ENCODE measurements at regions of chr6 and their contacts with region 1.

Region 1: GRCh38 chr6:30719791-30720737 is at the start of gene TUBB:
- DNase-seq: peak; percentile 95 to 97 (median 96)
- ATAC-seq: peak; percentile 69 to 83 (median 76)
- H3K4me3 ChIP-seq: peak within 1 kb of the TSS; percentile 47 to 84 (median 84)
- H3K27ac ChIP-seq: peak within 1 kb of the TSS; percentile 79 to 97 (median 86)
- H3K4me1 ChIP-seq: peaks cover 8 to 12% (median 8%) of the 10 kb centered on the region in 3 donors
- H3K27me3 ChIP-seq: no peaks in the 10 kb centered on the region
- CTCF ChIP-seq: no peak
- total RNA-seq, gene TUBB: 66.1 to 171 (median 116) TPM

Region 2: GRCh38 chr6:30541515-30542403 is 178.3 kb before region 1 on chr6:
- intact Hi-C with region 1: loop called in 1 of 3 experiments (anchors 10 kb)
- DNase-seq: peak; percentile 54 to 85 (median 76)
- ATAC-seq: peak; percentile 66 to 95 (median 88)
- H3K4me3 ChIP-seq: peak overlapping the region in 2 of 4 donors; percentile 10 to 24
- H3K27ac ChIP-seq: no peak overlapping the region
- H3K4me1 ChIP-seq: peaks cover 0 to 4% (median 3%) of the 10 kb centered on the region in 3 donors
- H3K27me3 ChIP-seq: no peaks in the 10 kb centered on the region
- CTCF ChIP-seq: peak; percentile 91 to 97 (median 94)

Region 3: DNA sequence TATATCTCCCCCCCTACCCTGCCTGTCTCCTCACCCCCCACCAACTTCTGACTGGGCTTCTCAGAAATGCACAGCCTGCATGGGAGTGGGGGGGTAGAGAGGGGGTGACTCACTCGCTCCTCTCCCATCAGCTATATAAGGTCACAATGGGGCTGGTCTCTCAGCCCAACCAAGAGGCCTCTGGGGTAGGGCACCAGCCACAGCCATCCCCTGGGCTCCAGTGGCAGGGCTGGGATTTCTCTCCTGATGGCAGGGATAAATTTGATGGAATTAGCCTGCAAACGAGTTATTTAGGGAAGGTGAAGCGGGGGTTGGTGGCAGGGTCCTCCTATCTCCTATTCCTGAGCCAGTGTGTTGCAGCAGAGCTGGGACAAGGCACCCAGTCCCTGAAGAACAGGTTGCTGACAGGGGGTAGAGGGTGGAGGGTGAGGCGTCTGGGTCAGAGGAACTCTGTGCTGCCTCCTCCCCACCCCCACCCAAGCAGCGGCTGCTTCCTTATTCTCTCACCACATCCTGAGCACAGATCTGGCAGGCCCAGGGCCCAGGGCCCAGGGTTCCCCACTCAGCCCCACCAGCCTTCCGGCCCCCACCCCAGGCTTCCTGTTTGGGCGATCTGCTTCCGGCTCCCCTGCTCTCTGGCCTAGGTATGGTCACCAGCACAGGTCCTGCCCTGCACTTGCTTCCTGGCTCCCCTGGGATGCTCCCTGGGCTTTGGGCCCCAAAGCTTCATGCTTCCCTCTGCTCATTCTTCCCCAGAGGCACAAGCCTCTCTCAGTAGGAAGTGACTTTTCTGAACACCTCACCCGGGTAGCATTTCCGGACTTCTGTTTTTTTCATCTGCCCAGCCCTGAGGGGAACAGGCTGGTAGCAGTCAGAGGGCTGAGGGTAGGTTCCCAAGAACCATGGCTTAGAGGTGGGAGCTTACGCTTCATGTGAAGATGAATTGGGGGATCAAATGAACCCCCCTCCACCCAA is 37.6 kb before region 1 on chr6:
- intact Hi-C with region 1: loop called (anchors 2 to 5 kb)
- DNase-seq: peak in 5 of 6 donors; percentile 45 to 75 (median 66)
- ATAC-seq: peak in 3 of 4 donors; percentile 11 to 30 (median 11)
- H3K4me3 ChIP-seq: peak overlapping the region in 3 of 4 donors; percentile 18 to 78 (median 65)
- H3K27ac ChIP-seq: peak overlapping the region; percentile 34 to 93 (median 64)
- H3K4me1 ChIP-seq: no peaks in the 10 kb centered on the region
- H3K27me3 ChIP-seq: no peaks in the 10 kb centered on the region
- CTCF ChIP-seq: no peak